Thyroid gland (tissue), 4 donors: ENCODE measurements at regions of chr14 and their contacts with region 1.

Region 1: DNA sequence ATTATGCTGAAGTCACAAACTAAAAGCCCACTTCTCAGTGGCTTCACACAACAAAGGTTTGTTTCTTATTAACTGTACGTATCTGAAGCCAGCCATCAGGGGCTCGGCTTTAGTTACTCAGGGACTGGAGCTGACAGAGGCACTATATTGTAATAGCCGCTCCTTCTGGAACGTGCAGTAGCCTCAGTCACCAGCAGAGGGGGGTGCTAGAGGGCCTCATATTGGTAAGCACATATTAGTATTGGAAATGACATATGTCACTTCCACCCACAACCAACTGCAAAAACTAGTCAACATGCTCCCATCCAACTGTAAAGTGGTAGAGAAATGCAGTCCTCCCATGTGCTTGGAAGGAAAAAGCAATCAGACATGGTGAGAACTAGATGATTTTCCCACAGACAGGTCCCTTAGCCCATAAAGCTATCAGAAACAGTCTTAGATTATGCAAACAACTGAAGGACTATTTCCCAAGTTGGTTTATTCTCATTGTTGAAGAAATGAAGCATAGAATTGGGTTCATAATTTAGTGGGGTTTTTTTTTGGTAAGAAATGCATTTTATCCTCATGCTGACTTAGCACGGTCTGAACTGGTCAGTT is 183.6 kb upstream of the G2E3 start:
- DNase-seq: peak; percentile 68 to 75
- H3K4me3 ChIP-seq: no peak overlapping the region
- H3K27ac ChIP-seq: no peak overlapping the region
- H3K4me1 ChIP-seq: no peaks in the 10 kb centered on the region
- H3K27me3 ChIP-seq: no peaks in the 10 kb centered on the region
- CTCF ChIP-seq: peak; percentile 42 to 81 (median 64)
- POLR2A ChIP-seq: no peak

Region 2: GRCh38 chr14:30521899-30522736 is 146.7 kb after region 1 on chr14:
- intact Hi-C with region 1: loop called (anchors 10 kb)
- DNase-seq: no peak
- H3K4me3 ChIP-seq: no peak overlapping the region
- H3K27ac ChIP-seq: no peak overlapping the region
- H3K4me1 ChIP-seq: peaks cover 0 to 4% of the 10 kb centered on the region in 2 donors
- H3K27me3 ChIP-seq: no peaks in the 10 kb centered on the region
- CTCF ChIP-seq: peak; percentile 32 to 79 (median 62)
- POLR2A ChIP-seq: no peak